ENCODE measurements at regions of chr2 and their contacts with region 1.

Region 1: DNA sequence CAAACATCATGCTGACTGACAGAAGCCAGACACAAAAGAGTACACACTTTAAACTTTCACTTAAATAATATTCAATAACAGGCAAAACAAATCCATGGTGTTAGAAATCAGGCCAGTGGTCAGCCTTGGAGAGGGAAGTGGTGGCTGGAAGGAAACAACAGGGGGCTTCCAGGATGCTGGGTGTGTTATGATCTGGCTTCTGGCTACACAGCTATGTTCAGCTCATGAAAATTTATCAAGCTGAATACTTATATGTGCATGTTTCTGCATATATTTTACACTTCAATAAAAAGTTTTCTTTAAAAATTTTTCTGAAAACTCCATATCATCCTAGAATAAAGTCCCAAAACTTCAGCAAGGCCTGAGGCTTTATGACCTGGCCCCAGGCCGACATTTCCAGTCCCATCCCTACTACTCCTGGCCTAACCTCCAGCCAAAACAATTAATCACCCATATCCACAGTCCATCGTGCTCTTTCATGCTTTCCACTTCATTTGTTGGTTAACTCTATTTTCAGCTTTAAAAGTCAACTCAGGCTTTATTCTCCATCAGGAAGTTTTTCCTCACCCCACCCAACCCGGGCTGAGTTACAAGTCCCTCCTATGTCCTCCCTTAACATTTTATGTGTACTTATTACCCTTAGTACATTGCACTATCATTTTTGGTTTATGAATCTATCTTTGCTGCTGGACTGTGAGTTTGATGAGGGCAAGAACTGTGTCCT is 27.9 kb upstream of the SPTBN1 start:
- DNase-seq: peak in 1 of 2 donors; percentile 62
- ATAC-seq: peak; percentile 55
- H3K4me3 ChIP-seq: no peak overlapping the region
- H3K27ac ChIP-seq: peak overlapping the region in 1 of 2 donors; percentile 33
- H3K4me1 ChIP-seq: no peaks in the 10 kb centered on the region
- H3K27me3 ChIP-seq: no peaks in the 10 kb centered on the region

Region 2: DNA sequence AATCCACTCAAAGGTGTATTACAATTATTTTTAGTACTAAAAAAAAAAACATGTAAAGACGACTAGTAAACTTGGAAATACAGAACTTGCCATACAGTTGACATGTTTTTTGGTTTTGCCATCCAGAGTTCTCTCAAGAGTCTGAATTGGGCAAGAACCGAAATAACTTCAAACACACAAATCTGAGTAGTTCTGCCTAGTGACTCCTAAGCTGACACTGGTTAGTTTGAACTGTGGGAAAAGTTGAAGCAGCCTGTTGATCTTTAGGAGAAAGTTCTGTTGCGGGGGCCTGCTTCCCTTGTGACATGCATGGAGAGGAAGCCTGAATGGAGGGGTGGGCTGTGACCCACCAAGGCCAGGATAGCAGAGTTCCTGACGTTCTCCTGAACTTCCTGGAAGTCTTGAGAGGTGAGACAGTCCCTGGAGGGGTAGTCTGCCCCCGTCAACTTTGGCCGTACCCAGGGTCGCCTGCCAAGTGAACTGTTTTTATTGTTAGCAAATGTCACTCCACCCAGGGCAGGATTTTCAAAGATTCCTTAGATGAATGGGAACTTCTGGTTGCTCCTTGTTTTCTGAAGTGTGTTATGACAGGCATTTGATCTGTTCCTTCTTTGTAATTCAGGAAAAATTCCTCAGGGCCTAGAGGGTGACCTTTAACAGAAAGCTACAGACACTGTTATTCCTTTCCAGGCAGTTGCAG is 57.7 kb before region 1 on chr2:
- intact Hi-C with region 1: loop called in 1 of 2 experiments (anchors 10 kb)
- DNase-seq: no peak
- ATAC-seq: peak; percentile 44
- H3K4me3 ChIP-seq: no peak overlapping the region
- H3K27ac ChIP-seq: no peak overlapping the region
- H3K4me1 ChIP-seq: no peaks in the 10 kb centered on the region
- H3K27me3 ChIP-seq: no peaks in the 10 kb centered on the region

Measured in aorta (tissue), 5 donors.